ENCODE measurements at regions of chr12 and their contacts with region 1.

Region 1: GRCh38 chr12:68821357-68822188 is 13.6 kb downstream of the MDM2 start:
- DNase-seq: no peak
- ATAC-seq: no peak
- H3K4me3 ChIP-seq: no peak overlapping the region
- H3K4me3 Mint-ChIP-seq: no peak overlapping the region
- H3K27ac ChIP-seq: peak overlapping the region; percentile 10
- H3K27ac Mint-ChIP-seq: peak overlapping the region; percentile 75 to 79
- H3K4me1 ChIP-seq: peaks cover 0 to 13% of the 10 kb centered on the region in 2 experiments
- H3K4me1 Mint-ChIP-seq: peaks cover 6 to 31% (median 26%) of the 10 kb centered on the region in 3 donors
- H3K27me3 ChIP-seq: no peaks in the 10 kb centered on the region
- H3K27me3 Mint-ChIP-seq: no peaks in the 10 kb centered on the region

Region 2: GRCh38 chr12:68565375-68565903 is 256.1 kb before region 1 on chr12:
- CTCF ChIA-PET with region 1: interaction called in 1 of 2 experiments, 14 read pairs
- POLR2A ChIA-PET with region 1: no interaction called
- DNase-seq: peak in 1 of 35 experiments; percentile 19
- ATAC-seq: peak in 3 of 4 experiments; percentile 31 to 58 (median 55)
- H3K4me3 ChIP-seq: no peak overlapping the region
- H3K4me3 Mint-ChIP-seq: no peak overlapping the region
- H3K27ac ChIP-seq: no peak overlapping the region
- H3K27ac Mint-ChIP-seq: no peak overlapping the region
- H3K4me1 ChIP-seq: peaks cover 5 to 13% of the 10 kb centered on the region in 2 experiments
- H3K4me1 Mint-ChIP-seq: peaks cover 21 to 22% (median 22%) of the 10 kb centered on the region in 3 donors
- H3K27me3 ChIP-seq: no peaks in the 10 kb centered on the region
- H3K27me3 Mint-ChIP-seq: no peaks in the 10 kb centered on the region

Region 3: DNA sequence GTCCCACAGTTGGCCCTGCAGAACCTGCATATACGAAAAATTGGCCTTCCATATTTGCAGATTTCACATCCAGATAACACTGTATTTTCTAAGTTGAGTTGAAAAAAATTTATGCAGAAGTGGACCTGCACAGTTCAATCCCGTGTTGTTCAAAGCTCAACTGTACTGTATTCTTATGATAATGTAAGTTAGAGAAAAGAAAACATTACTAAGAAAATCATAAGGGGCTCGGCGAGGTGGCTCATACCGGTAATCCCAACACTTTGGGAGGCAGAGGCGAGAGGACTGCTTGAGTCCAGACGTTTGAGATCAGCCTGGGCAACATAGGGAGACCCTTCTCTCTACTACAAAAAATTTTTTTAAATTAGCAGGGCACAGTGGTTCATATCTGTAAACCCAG is 93.8 kb before region 1 on chr12:
- CTCF ChIA-PET with region 1: interaction called in 1 of 2 experiments, 6 read pairs
- POLR2A ChIA-PET with region 1: interaction called in 1 of 2 experiments, 12 read pairs
- DNase-seq: no peak
- ATAC-seq: no peak
- H3K4me3 ChIP-seq: no peak overlapping the region
- H3K4me3 Mint-ChIP-seq: no peak overlapping the region
- H3K27ac ChIP-seq: no peak overlapping the region
- H3K27ac Mint-ChIP-seq: no peak overlapping the region
- H3K4me1 ChIP-seq: no peaks in the 10 kb centered on the region
- H3K4me1 Mint-ChIP-seq: no peaks in the 10 kb centered on the region
- H3K27me3 ChIP-seq: no peaks in the 10 kb centered on the region
- H3K27me3 Mint-ChIP-seq: no peaks in the 10 kb centered on the region

Measured in T-cell (primary cell).